Activated CD8-positive, alpha-beta memory T cell treated with anti-CD3 and anti-CD28 coated beads, Interleukin-2, amount 10 ng/mL, durations not matched to agents 7 days and 5 days (primary cell): ENCODE measurements at regions of chr7 and their contacts with region 1.

Region 1: GRCh38 chr7:74272305-74273038 is 16.7 kb upstream of the CLIP2 start:
- DNase-seq: peak; percentile 84
- ATAC-seq: peak; percentile 68
- H3K4me3 Mint-ChIP-seq: no peak overlapping the region
- H3K27ac Mint-ChIP-seq: peak overlapping the region; percentile 60
- H3K4me1 Mint-ChIP-seq: peaks cover 17% of the 10 kb centered on the region
- H3K27me3 Mint-ChIP-seq: peaks cover 13% of the 10 kb centered on the region

Region 2: GRCh38 chr7:74289018-74289658 is 16.7 kb after region 1 on chr7 and contains the start of gene CLIP2:
- CTCF ChIA-PET with region 1: interaction called, 28 read pairs
- DNase-seq: peak; percentile 76
- ATAC-seq: peak; percentile 91
- H3K4me3 Mint-ChIP-seq: peak within 1 kb of the TSS; percentile 74
- H3K27ac Mint-ChIP-seq: peak within 1 kb of the TSS; percentile 58
- H3K4me1 Mint-ChIP-seq: peaks cover 20% of the 10 kb centered on the region
- H3K27me3 Mint-ChIP-seq: peaks cover 51% of the 10 kb centered on the region
- total RNA-seq, gene CLIP2: 1.9 to 4.6 TPM

Region 3: GRCh38 chr7:74306730-74307469 is 34.4 kb after region 1 on chr7:
- CTCF ChIA-PET with region 1: no interaction called
- DNase-seq: no peak
- ATAC-seq: peak; percentile 37
- H3K4me3 Mint-ChIP-seq: peak overlapping the region; percentile 22
- H3K27ac Mint-ChIP-seq: no peak overlapping the region
- H3K4me1 Mint-ChIP-seq: peaks cover 25% of the 10 kb centered on the region
- H3K27me3 Mint-ChIP-seq: peaks cover 14% of the 10 kb centered on the region